GM13976 (cell line): ENCODE measurements at regions of chr14 and their contacts with region 1.

Region 1: GRCh38 chr14:52299692-52300278 is 14.3 kb upstream of the PTGER2 start:
- DNase-seq: peak; percentile 64
- CTCF ChIP-seq: peak; percentile 27

Region 2: DNA sequence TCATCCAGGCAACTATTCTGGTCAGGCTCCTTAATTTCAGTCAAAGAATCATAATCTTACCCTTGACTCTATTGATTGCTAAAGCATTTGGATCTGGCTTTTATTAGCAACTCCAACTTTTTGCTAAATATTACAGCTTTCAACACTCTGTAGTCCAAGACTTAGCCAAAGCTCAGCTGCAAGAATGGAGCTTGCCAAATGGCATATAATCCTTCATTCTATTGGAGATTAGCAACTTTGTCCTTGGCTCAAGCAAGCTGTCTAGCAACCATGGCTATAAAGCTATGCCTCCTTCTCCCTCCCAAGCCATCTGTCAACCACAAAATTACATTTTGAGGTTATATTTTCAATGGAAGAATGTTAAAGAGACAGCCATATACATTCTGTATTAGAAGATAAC is 207.9 kb before region 1 on chr14:
- in situ Hi-C with region 1: no loop called
- DNase-seq: no peak
- CTCF ChIP-seq: no peak

Region 3: DNA sequence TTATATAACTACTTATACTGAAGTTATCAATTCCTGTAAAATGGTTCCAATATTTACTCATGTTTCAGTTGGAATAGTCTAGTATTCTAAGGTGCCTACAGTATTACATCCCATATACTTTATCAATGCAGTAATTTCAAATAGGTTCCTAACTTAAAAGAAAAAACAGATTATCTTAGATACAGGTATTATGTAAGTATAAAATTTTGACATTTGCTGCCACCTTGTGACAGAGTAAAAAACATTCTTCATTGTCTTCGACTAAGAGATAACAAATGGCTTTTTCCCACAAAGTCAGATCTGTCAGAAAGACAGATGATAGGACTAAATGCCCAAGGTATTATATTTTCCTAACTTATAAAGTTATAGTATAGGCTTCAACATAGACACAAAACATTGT is 173.8 kb after region 1 on chr14:
- in situ Hi-C with region 1: loop called (anchors 10 kb)
- DNase-seq: peak; percentile 33
- CTCF ChIP-seq: no peak

Region 4: DNA sequence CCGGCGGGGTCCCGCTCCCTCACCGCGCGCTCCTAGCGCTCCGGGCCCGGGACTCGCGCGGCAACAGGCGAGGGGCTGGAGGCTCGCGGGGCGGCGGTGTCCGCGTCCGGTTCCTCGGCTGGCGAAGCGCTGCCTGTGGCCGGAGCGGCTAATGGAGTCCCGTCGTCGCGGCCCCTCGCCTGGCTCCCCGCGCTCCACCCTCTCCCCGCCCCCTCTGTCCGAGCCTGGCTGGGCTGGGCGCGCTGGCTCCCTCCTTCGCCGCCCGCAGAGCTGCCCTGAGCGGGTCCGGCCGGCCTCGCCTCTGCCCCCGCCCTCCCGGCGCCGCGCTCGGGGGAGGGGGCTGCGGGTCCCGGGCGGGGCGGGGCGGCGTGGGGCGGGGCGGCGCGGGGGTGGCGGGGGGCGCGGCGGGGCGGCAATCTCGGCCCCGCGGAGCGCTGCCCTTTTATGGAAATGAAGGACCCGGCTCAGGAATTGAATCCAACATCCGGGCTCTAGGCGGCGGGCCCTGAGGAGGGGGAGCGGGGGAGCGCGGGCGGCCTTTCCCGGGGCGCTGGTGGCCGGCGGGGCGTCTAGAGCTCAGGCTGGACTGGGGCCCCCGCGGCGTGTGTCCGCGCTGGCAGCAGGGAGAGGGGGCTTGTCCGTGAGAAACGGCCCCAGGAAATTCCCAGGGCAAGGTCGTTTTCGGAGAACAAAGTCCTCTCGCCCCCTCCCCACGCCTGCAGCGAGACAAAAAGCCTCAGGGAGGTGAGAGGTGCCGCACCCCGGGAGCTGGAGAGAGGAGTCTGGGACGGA is 651.3 kb after region 1 on chr14 and contains the start of gene FERMT2:
- in situ Hi-C with region 1: loop called (anchors 25 kb)
- DNase-seq: peak; percentile 86
- CTCF ChIP-seq: no peak